ENCODE measurements at regions of chr20 and their contacts with region 1.

Region 1: GRCh38 chr20:645318-646106 is 7.5 kb downstream of the SRXN1 start:
- DNase-seq: peak; percentile 90
- H3K4me3 ChIP-seq: no peak overlapping the region
- H3K27ac ChIP-seq: peak overlapping the region in 1 of 8 donors; percentile 28
- H3K4me1 ChIP-seq: peaks cover 3 to 28% (median 12%) of the 10 kb centered on the region in 6 donors
- H3K27me3 ChIP-seq: peaks cover 4 to 26% (median 10%) of the 10 kb centered on the region in 7 donors
- CTCF ChIP-seq: peak; percentile 53 to 97 (median 89)
- POLR2A ChIP-seq: no peak

Region 2: DNA sequence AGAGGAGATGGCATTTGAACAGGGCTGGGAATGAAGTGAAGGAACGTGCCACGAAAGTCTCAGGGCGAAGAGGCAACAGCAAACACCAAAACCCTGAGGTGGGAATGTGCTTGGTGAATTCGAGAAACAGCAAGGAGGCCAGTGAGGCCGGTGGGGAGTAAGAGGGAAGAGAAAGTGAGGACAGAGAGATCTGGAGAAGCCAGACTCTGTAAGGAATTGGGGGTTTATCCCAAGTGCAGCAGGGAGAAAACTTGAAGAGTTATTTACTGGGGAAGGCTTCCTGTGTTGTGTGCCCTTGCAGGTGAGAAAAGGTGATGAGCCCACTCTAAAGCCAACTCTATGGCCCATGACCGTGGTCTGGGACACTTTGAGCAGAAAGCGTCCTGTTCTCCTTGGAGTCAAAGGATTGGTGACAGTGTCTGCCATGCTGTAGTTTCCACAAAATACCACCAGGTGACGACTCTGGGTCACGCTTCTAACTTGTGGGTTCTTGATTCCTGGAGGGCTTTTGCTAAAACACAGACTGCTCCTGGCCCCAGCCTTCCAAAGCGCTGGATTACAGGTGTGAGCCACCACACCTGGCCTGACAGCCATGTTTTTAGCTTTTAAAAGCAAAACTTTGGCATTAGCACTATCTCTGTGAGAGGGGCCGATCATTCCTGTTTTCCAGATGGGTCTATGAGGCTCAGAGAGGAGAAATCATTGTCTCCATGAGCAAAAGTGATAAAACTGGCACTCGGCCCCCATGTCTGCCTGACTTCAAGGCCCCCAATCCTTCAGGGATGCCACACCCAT is 83.9 kb before region 1 on chr20:
- intact Hi-C with region 1: loop called (anchors 10 kb)
- DNase-seq: no peak
- H3K4me3 ChIP-seq: no peak overlapping the region
- H3K27ac ChIP-seq: no peak overlapping the region
- H3K4me1 ChIP-seq: peaks cover 0 to 4% (median 0%) of the 10 kb centered on the region in 6 donors
- H3K27me3 ChIP-seq: peaks cover 0 to 29% (median 0%) of the 10 kb centered on the region in 7 donors
- CTCF ChIP-seq: peak; percentile 53 to 87 (median 82)
- POLR2A ChIP-seq: no peak

Measured in spleen (tissue), 13 donors.